ENCODE measurements at regions of chr4 and their contacts with region 1.

Region 1: GRCh38 chr4:145719752-145720624 is 40.0 kb downstream of the C4orf51 start:
- DNase-seq: no peak
- H3K4me3 ChIP-seq: no peak overlapping the region
- H3K27ac ChIP-seq: no peak overlapping the region
- H3K4me1 ChIP-seq: no peaks in the 10 kb centered on the region
- H3K27me3 ChIP-seq: no peaks in the 10 kb centered on the region
- CTCF ChIP-seq: no peak
- EP300 ChIP-seq: no peak
- POLR2A ChIP-seq: no peak

Region 2: DNA sequence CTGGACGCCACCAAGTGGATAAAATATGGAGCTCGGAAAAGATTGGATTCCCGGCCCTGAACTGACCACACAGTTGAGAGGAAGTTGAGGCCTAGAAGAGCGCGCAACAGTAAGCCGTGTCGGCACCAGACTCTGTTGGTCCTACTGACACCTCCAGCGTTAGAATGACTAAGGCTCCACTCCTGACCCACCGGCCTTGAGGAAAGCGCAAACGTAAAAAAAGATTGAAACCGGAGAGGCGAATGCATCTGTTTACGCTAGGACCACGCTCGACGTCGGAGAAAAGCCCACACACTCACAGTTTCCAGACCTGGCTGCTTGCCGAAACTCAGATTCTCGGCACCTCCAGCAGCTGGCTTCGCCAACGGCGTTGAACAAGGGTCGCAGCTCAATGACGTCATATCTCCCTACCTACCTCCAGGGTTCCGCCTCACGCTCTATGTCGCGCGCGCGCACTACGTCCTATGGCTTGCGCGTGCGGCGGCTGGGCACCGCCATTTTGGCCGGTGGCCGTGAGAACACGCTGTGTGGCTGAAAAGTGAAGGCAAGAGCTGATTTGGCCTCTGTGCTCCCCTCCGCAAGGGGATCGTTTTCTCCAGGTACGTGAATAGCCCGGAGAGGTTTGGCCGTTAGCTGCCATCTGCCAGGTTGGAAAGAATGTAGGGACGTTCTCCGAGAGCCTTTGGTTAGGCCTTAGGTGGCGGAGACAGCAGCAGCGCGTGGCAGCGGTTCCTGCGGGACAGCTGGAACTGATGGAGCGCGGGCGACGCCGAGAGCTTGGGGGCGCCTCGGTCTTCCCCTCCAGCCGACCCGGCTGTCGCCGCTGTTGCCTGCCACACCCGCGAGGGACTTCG is 621.9 kb before region 1 on chr4 and contains the starts of genes ABCE1 and ANAPC10:
- intact Hi-C with region 1: no loop called
- DNase-seq: peak; percentile 98
- H3K4me3 ChIP-seq: peak within 1 kb of the TSS; percentile 71 to 88 (median 82)
- H3K27ac ChIP-seq: peak within 1 kb of the TSS; percentile 90 to 92 (median 91)
- H3K4me1 ChIP-seq: peaks cover 26 to 58% (median 49%) of the 10 kb centered on the region in 4 donors
- H3K27me3 ChIP-seq: no peaks in the 10 kb centered on the region
- CTCF ChIP-seq: peak; percentile 1 to 28 (median 26)
- EP300 ChIP-seq: no peak
- POLR2A ChIP-seq: peak; percentile 25
- total RNA-seq, gene ABCE1: 35.7 to 78.4 (median 42.5) TPM
- total RNA-seq, gene ANAPC10: 17.8 to 32.0 (median 21.3) TPM

Region 3: DNA sequence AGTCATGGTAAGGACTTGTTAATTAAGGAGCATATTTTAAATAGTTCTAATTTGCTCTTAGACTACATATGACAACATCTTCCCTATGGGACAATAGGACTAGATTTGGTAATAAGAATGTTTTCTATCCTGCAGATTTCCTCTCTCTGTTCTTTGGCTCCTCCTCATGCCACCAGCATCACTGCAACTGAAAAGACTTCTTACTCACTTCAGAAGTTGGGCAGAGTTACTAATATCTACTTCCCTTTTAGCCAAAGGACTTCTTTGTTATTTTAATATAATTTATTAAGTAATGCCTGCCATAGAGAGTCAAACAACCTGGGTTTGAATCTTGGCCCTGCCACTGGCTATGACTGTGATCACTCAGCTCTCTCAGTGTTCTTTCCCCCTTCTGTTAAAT is 84.4 kb before region 1 on chr4:
- intact Hi-C with region 1: loop called (anchors 10 kb)
- DNase-seq: no peak
- H3K4me3 ChIP-seq: no peak overlapping the region
- H3K27ac ChIP-seq: no peak overlapping the region
- H3K4me1 ChIP-seq: peaks cover 0 to 8% (median 5%) of the 10 kb centered on the region in 4 donors
- H3K27me3 ChIP-seq: no peaks in the 10 kb centered on the region
- CTCF ChIP-seq: no peak
- EP300 ChIP-seq: no peak
- POLR2A ChIP-seq: no peak

Measured in esophagus muscularis mucosa (tissue), 4 donors.